ENCODE measurements at regions of chr15 and their contacts with region 1.

Region 1: DNA sequence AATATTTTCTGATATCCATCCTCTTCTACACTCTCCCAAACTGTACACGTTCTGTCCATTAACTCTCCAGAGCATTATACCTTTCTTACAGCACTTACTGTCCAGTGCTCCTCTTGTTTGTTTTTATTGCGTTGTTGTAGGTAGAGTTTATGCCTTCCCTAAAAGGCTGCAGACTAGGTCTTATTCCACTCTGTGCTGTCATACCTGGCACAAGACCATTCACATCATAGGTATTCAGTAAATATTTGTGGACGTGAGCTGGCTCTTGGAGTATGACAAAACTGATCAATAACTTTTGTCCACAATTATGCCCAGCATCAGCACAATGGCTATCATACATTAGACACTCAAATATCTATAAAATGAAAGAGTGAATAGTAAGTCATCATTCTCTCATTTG is 4.4 kb downstream of the HMG20A start:
- DNase-seq: no peak
- H3K4me3 ChIP-seq: no peak overlapping the region
- H3K27ac ChIP-seq: peak overlapping the region in 5 of 8 donors; percentile 14 to 97 (median 93)
- H3K4me1 ChIP-seq: peaks cover 21 to 82% (median 62%) of the 10 kb centered on the region in 6 donors
- H3K27me3 ChIP-seq: no peaks in the 10 kb centered on the region
- CTCF ChIP-seq: no peak
- POLR2A ChIP-seq: no peak

Region 2: GRCh38 chr15:77409259-77410156 is 15.6 kb before region 1 on chr15:
- intact Hi-C with region 1: loop called (anchors 2 kb)
- DNase-seq: no peak
- H3K4me3 ChIP-seq: peak overlapping the region in 2 of 8 donors; percentile 1 to 28
- H3K27ac ChIP-seq: peak overlapping the region; percentile 30 to 83 (median 62)
- H3K4me1 ChIP-seq: peaks cover 20 to 88% (median 47%) of the 10 kb centered on the region in 6 donors
- H3K27me3 ChIP-seq: no peaks in the 10 kb centered on the region
- CTCF ChIP-seq: no peak
- POLR2A ChIP-seq: no peak